GM12878 (cell line): ENCODE measurements at regions of chr12 and their contacts with region 1.

Region 1: GRCh38 chr12:56461235-56462159 is 6.9 kb upstream of the SPRYD4 start:
- DNase-seq: no peak
- ATAC-seq: no peak; the same call in 2 of the 3 replicates
- H3K4me3 ChIP-seq: no peak overlapping the region
- H3K27ac ChIP-seq: no peak overlapping the region
- H3K4me1 ChIP-seq: peaks cover 10% of the 10 kb centered on the region
- H3K27me3 ChIP-seq: no peaks in the 10 kb centered on the region
- CTCF ChIP-seq: no peak
- EP300 ChIP-seq: no peak
- POLR2A ChIP-seq: no peak
- RAD21 ChIP-seq: no peak

Region 2: GRCh38 chr12:56071648-56072047 is 389.8 kb before region 1 on chr12:
- CTCF ChIA-PET with region 1: no interaction called
- POLR2A ChIA-PET with region 1: no interaction called
- RAD21 ChIA-PET with region 1: no interaction called
- SMC1A ChIA-PET with region 1: no interaction called
- in situ Hi-C with region 1: no loop called
- intact Hi-C with region 1: no loop called
- DNase-seq: no peak
- ATAC-seq: no peak
- H3K4me3 ChIP-seq: no peak overlapping the region
- H3K27ac ChIP-seq: no peak overlapping the region
- H3K4me1 ChIP-seq: no peaks in the 10 kb centered on the region
- H3K27me3 ChIP-seq: no peaks in the 10 kb centered on the region
- CTCF ChIP-seq: no peak
- EP300 ChIP-seq: no peak
- POLR2A ChIP-seq: no peak
- RAD21 ChIP-seq: no peak

Region 3: DNA sequence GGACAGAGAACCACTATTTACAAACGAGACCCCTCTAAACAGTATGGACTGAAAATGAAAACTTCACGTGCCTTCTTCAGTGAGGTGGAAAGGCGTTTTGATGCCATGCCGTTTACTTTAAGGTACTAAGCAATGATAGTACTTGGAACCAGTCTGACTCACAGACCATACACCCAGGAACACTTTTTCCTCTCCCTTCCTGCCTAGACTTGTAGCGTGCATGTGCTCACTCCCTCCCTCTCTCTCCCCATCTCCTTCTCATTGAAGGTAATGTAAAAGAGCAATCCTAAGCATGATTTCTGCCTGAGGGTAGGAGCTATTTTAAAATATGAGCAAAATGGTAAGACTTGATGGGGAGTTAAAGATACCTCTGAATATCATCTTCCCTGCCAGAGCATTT is 350.9 kb before region 1 on chr12:
- CTCF ChIA-PET with region 1: no interaction called
- POLR2A ChIA-PET with region 1: no interaction called
- RAD21 ChIA-PET with region 1: no interaction called
- SMC1A ChIA-PET with region 1: no interaction called
- in situ Hi-C with region 1: no loop called
- intact Hi-C with region 1: no loop called
- DNase-seq: no peak
- ATAC-seq: no peak
- H3K4me3 ChIP-seq: no peak overlapping the region
- H3K27ac ChIP-seq: no peak overlapping the region
- H3K4me1 ChIP-seq: peaks cover 6% of the 10 kb centered on the region
- H3K27me3 ChIP-seq: no peaks in the 10 kb centered on the region
- CTCF ChIP-seq: no peak
- EP300 ChIP-seq: no peak
- POLR2A ChIP-seq: no peak
- RAD21 ChIP-seq: no peak

Region 4: GRCh38 chr12:56206457-56207166 is 254.9 kb before region 1 on chr12:
- CTCF ChIA-PET with region 1: interaction called, 52 read pairs
- POLR2A ChIA-PET with region 1: no interaction called
- RAD21 ChIA-PET with region 1: interaction called, 12 read pairs
- SMC1A ChIA-PET with region 1: interaction called, 23 read pairs
- in situ Hi-C with region 1: no loop called
- intact Hi-C with region 1: loop called (anchors 1 kb)
- DNase-seq: no peak
- ATAC-seq: peak; percentile 95
- H3K4me3 ChIP-seq: no peak overlapping the region
- H3K27ac ChIP-seq: no peak overlapping the region
- H3K4me1 ChIP-seq: no peaks in the 10 kb centered on the region
- H3K27me3 ChIP-seq: no peaks in the 10 kb centered on the region
- CTCF ChIP-seq: peak; percentile 67 to 79 (median 75)
- EP300 ChIP-seq: no peak
- POLR2A ChIP-seq: no peak; the same call in 1 of the 2 replicates
- RAD21 ChIP-seq: peak; percentile 45

Region 5: DNA sequence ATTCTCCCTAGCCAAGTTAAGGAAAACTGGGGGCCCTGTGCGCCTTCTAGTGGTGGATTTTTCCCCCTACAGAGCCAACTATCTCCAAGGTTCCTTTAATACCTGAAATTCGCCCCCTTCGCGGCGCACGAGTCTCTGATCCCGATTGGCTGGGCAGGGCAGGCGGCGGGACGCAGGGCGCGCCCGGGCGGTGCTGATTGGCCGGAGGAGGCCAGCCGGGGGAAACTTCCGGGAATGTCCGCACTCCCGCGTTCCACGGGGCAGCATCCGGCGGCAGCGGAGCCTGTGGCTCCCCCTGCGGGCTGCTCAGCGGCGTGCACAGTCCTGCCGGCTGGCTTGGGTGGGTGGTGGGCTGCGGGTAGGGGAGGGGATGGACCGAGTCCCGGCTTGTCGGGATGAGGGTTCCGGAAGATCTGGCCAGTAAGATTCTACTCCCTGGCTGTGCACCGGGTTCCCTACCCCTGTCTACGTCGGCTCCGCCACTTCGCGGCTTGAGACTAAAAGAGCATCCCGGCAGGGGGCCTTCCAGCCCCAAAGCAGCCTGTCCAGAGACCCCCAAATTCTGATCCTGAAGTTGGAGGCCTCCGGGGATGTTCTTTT is 237.3 kb before region 1 on chr12 and contains the start of gene NABP2:
- CTCF ChIA-PET with region 1: interaction called, 12 read pairs
- POLR2A ChIA-PET with region 1: interaction called, 12 read pairs
- RAD21 ChIA-PET with region 1: interaction called, 11 read pairs
- SMC1A ChIA-PET with region 1: interaction called, 9 read pairs
- in situ Hi-C with region 1: no loop called
- intact Hi-C with region 1: no loop called
- DNase-seq: peak; percentile 89
- ATAC-seq: peak; percentile 90
- H3K4me3 ChIP-seq: peak within 1 kb of the TSS; percentile 97
- H3K27ac ChIP-seq: peak within 1 kb of the TSS; percentile 65
- H3K4me1 ChIP-seq: 0 out of 2 replicates have a peak, but pooled peaks cover 3% of the 10 kb centered on the region
- H3K27me3 ChIP-seq: no peaks in the 10 kb centered on the region
- CTCF ChIP-seq: peak; percentile 65 to 86 (median 85)
- EP300 ChIP-seq: 0 out of 4 replicates have a peak, but pooled peaks of 1 of the 2 experiments have one; percentile 7
- POLR2A ChIP-seq: peak; percentile 78
- RAD21 ChIP-seq: peak; percentile 49; the same call in 1 of the 2 replicates
- polyA plus RNA-seq, gene NABP2: 20.7 to 29.5 TPM

Region 6: GRCh38 chr12:56315622-56316473 is 145.6 kb before region 1 on chr12 and contains the start of gene CNPY2:
- CTCF ChIA-PET with region 1: interaction called, 76 read pairs
- POLR2A ChIA-PET with region 1: interaction called, 7 read pairs
- RAD21 ChIA-PET with region 1: interaction called, 71 read pairs
- SMC1A ChIA-PET with region 1: interaction called, 21 read pairs
- in situ Hi-C with region 1: no loop called
- intact Hi-C with region 1: loop called (anchors 1 kb)
- DNase-seq: peak; percentile 97
- ATAC-seq: peak; percentile 95
- H3K4me3 ChIP-seq: peak within 1 kb of the TSS; percentile 97
- H3K27ac ChIP-seq: peak within 1 kb of the TSS; percentile 92
- H3K4me1 ChIP-seq: peaks cover 3% of the 10 kb centered on the region
- H3K27me3 ChIP-seq: no peaks in the 10 kb centered on the region
- CTCF ChIP-seq: peak in 1 of 3 experiments; percentile 50; a peak in 2 of 6 replicates
- EP300 ChIP-seq: no peak
- POLR2A ChIP-seq: peak; percentile 97
- RAD21 ChIP-seq: peak; percentile 55
- polyA plus RNA-seq, gene CNPY2: 25.0 to 50.3 TPM

Region 7: GRCh38 chr12:56333679-56334489 is 127.6 kb before region 1 on chr12 and contains the start of gene PAN2:
- CTCF ChIA-PET with region 1: interaction called, 7 read pairs
- POLR2A ChIA-PET with region 1: interaction called, 13 read pairs
- RAD21 ChIA-PET with region 1: interaction called, 8 read pairs
- SMC1A ChIA-PET with region 1: interaction called, 12 read pairs
- in situ Hi-C with region 1: no loop called
- intact Hi-C with region 1: loop called (anchors 5 kb)
- DNase-seq: peak; percentile 89
- ATAC-seq: peak; percentile 97
- H3K4me3 ChIP-seq: peak within 1 kb of the TSS; percentile 97
- H3K27ac ChIP-seq: peak within 1 kb of the TSS; percentile 99
- H3K4me1 ChIP-seq: peaks cover 24% of the 10 kb centered on the region
- H3K27me3 ChIP-seq: no peaks in the 10 kb centered on the region
- CTCF ChIP-seq: peak; percentile 37 to 47 (median 43); a peak in 5 of 6 replicates
- EP300 ChIP-seq: 0 out of 4 replicates have a peak, but pooled peaks have one; percentile 6 to 29
- POLR2A ChIP-seq: peak; percentile 73
- RAD21 ChIP-seq: peak; percentile 33; the same call in 1 of the 2 replicates
- polyA plus RNA-seq, gene PAN2: 14.4 to 14.5 TPM

Region 8: DNA sequence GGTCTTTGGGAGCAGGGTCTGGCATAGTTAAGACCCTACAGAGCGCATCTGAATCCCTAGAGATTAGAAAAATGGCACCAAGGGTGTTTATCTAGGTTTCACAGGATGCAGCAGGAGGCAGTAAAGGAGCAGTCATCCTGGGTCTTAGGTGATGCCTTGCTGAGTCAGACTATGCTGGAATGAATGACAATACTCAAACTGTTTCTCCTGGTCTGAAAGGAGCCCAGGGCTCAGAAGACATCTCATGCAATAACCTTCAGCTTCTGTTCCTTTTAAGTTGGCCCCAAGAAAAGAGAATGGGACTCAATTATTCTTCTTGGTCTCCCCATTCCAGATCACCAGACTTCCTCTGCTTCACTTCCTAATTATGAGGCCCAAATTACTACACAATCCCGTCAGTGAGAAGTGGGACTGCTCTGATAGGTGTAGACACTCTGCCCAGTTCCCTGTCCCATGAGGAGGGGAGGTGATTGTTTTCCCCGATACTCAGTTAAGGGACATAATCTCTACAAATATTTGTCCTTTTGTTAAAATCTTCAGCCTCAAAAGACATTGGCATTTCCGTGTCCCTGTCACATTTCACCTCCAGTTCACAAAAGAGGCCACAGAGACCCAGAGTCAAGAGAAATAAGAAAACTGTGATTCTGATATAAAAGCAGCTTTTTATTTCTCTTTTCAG is 84.0 kb before region 1 on chr12:
- CTCF ChIA-PET with region 1: interaction called, 28 read pairs
- POLR2A ChIA-PET with region 1: interaction called, 3 read pairs
- RAD21 ChIA-PET with region 1: interaction called, 5 read pairs
- SMC1A ChIA-PET with region 1: interaction called, 10 read pairs
- in situ Hi-C with region 1: no loop called
- intact Hi-C with region 1: no loop called
- DNase-seq: no peak
- ATAC-seq: no peak
- H3K4me3 ChIP-seq: no peak overlapping the region
- H3K27ac ChIP-seq: peak overlapping the region; percentile 25; the same call in 1 of the 2 replicates
- H3K4me1 ChIP-seq: peaks cover 36% of the 10 kb centered on the region
- H3K27me3 ChIP-seq: no peaks in the 10 kb centered on the region
- CTCF ChIP-seq: peak in 1 of 3 experiments; percentile 10; a peak in 1 of 6 replicates
- EP300 ChIP-seq: no peak
- POLR2A ChIP-seq: no peak
- RAD21 ChIP-seq: peak; percentile 46

Region 9: GRCh38 chr12:56448860-56449621 is 12.5 kb before region 1 on chr12 and contains the start of gene TIMELESS:
- CTCF ChIA-PET with region 1: interaction called, 89 read pairs
- POLR2A ChIA-PET with region 1: interaction called, 63 read pairs
- RAD21 ChIA-PET with region 1: interaction called, 32 read pairs
- SMC1A ChIA-PET with region 1: interaction called, 37 read pairs
- in situ Hi-C with region 1: no loop called
- intact Hi-C with region 1: no loop called
- DNase-seq: peak; percentile 77
- ATAC-seq: peak; percentile 98
- H3K4me3 ChIP-seq: peak within 1 kb of the TSS; percentile 91
- H3K27ac ChIP-seq: peak within 1 kb of the TSS; percentile 75
- H3K4me1 ChIP-seq: no peaks in the 10 kb centered on the region
- H3K27me3 ChIP-seq: no peaks in the 10 kb centered on the region
- CTCF ChIP-seq: no peak
- EP300 ChIP-seq: no peak
- POLR2A ChIP-seq: peak; percentile 91
- RAD21 ChIP-seq: no peak
- polyA plus RNA-seq, gene TIMELESS: 10.4 to 20.5 TPM